ENCODE measurements at regions of chr5 and their contacts with region 1.

Region 1: GRCh38 chr5:53095931-53096525 is 13.5 kb downstream of the MOCS2 start:
- ATAC-seq: peak in 4 of 8 experiments; percentile 41 to 77 (median 68)
- H3K4me3 ChIP-seq: no peak overlapping the region
- H3K27ac ChIP-seq: no peak overlapping the region
- H3K4me1 ChIP-seq: peaks cover 0 to 2% of the 10 kb centered on the region in 2 donors

Region 2: DNA sequence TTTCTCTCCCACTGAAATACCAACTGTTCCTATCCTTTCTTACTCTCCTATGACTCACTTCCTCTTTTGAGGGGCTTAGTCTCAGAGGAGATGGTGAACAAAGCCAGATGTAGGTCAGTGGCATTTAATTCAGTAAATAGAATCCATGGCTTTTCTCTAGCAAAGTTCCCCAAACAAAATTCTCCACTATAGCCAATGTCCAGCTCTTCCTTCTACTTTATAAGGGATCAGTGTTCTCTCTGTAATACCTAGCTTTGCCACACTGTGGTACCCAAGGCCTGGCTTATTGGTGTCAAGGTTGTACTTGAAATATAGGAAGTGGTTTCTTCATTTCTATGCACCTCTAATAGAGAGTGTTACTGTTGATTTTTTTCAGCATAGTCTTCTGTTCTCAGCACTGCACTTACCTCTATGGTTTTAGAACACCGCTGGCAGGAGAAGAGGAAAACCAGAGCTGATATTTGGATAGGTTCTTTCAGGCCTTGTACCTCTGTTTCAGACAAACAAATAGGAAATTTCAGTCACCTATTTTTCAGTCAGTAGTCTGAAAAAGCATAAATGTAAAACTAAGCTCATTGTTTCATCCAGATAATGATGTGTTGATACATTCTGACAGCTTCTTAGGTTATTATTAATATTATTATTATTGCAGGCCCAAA is 147.5 kb before region 1 on chr5:
- in situ Hi-C with region 1: loop called in 5 of 9 experiments (anchors 10 to 25 kb)
- ATAC-seq: peak; percentile 74 to 99 (median 84)
- H3K4me3 ChIP-seq: no peak overlapping the region
- H3K27ac ChIP-seq: no peak overlapping the region
- H3K4me1 ChIP-seq: no peaks in the 10 kb centered on the region

Region 3: GRCh38 chr5:52961274-52961681 is 134.8 kb before region 1 on chr5:
- in situ Hi-C with region 1: loop called in 3 of 9 experiments (anchors 10 to 25 kb)
- ATAC-seq: peak in 1 of 8 experiments; percentile 9
- H3K4me3 ChIP-seq: no peak overlapping the region
- H3K27ac ChIP-seq: no peak overlapping the region
- H3K4me1 ChIP-seq: no peaks in the 10 kb centered on the region

Region 4: GRCh38 chr5:53351371-53351770 is 255.3 kb after region 1 on chr5:
- in situ Hi-C with region 1: no loop called
- ATAC-seq: peak in 1 of 8 experiments; percentile 29
- H3K4me3 ChIP-seq: no peak overlapping the region
- H3K27ac ChIP-seq: no peak overlapping the region
- H3K4me1 ChIP-seq: no peaks in the 10 kb centered on the region